Activated naive CD4-positive, alpha-beta T cell treated with anti-CD3 and anti-CD28 coated beads for 36 hours (primary cell): ENCODE measurements at regions of chr13 and their contacts with region 1.

Region 1: DNA sequence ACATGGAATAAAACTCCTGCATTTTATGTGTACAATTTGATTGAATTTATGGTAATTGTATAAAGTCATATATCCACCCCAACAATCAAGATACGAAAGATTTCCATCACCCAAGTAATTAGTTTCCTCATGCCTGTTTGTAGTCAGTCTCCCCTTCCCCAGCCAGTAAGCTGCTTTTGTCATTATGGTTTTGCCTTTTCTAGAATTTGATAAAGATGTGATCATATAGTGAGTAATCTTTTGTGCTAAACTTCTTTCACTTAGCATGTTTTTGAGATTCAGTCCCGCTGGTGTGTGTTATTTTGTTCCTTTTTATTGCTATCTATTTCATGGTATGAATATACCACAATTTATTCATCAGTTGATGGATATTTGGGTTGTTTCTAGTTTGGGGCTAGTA is 16.0 kb downstream of the ITM2B start:
- DNase-seq: no peak
- H3K4me3 Mint-ChIP-seq: peak overlapping the region; percentile 16
- H3K27ac Mint-ChIP-seq: peak overlapping the region; percentile 81
- H3K4me1 Mint-ChIP-seq: peaks cover 72% of the 10 kb centered on the region
- H3K27me3 Mint-ChIP-seq: no peaks in the 10 kb centered on the region

Region 2: DNA sequence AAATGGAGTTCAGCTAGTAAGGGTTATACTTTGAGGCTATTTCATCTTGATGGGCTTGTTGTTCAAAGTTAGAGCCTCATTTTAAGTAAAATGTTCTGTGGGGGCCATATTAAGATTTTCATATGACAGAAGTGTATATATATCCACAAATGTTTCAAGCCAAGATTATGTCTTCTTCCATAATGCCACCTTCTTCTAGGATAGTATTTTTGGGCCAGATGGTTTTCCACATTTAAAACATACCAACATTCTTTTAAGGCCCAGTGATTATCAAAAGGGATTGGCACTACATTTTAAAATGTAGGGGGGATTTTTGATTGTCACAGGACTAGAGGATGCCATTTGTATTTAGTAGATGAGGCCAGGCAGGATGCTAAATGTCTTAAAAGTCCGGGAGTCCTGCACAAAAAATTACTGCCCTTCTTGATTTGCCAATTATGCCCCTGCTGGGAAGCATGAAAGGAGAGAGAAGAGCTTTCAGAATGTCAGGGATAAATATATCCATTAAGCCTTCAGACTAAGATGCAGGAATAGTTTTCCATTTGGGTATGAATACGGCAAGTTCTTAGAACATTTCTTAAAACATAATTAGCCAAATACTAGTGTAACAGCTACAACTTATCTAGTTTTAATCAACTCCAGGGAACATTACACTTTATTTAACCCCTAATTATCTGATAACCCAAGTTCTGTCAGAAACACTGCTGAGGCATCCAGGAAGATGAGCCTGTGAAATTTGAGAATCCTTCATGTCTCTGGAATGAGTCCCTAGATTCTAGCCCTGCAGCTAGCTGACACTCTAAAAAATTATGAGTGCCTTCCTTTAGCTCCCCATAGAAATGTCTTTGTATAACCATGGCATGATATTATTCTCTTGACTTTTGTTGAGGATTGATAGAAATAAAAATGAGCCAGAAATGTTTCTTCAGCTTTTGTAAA is 18.0 kb after region 1 on chr13:
- CTCF ChIA-PET with region 1: interaction called, 3 read pairs
- intact Hi-C with region 1: loop called (anchors 1 kb)
- DNase-seq: no peak
- H3K4me3 Mint-ChIP-seq: no peak overlapping the region
- H3K27ac Mint-ChIP-seq: no peak overlapping the region
- H3K4me1 Mint-ChIP-seq: peaks cover 42% of the 10 kb centered on the region
- H3K27me3 Mint-ChIP-seq: no peaks in the 10 kb centered on the region